Activated T-helper 1 cell treated with anti-CD3 and anti-CD28 coated beads, Interleukin-12 subunit alpha, Interleukin-12 subunit beta, Interleukin-2, Interleukin-4 antibody, amounts not matched to agents 30 ng/mL and 10 ng/mL and 1 ng/mL, durations not matched to agents 14 hours and 24 hours and 36 hours (primary cell): ENCODE measurements at regions of chr7 and their contacts with region 1.

Region 1: GRCh38 chr7:96321658-96322372 is at the start of gene SLC25A13:
- DNase-seq: peak; percentile 62
- H3K4me3 Mint-ChIP-seq: peak within 1 kb of the TSS; percentile 95
- H3K27ac Mint-ChIP-seq: peak within 1 kb of the TSS; percentile 98
- H3K4me1 Mint-ChIP-seq: peaks cover 41% of the 10 kb centered on the region
- H3K27me3 Mint-ChIP-seq: no peaks in the 10 kb centered on the region
- total RNA-seq, gene SLC25A13: 18.5 and 21.0 TPM in 2 replicates

Region 2: GRCh38 chr7:96285579-96285978 is 36.2 kb before region 1 on chr7:
- intact Hi-C with region 1: loop called (anchors 1 kb)
- DNase-seq: peak; percentile 50
- H3K4me3 Mint-ChIP-seq: peak overlapping the region; percentile 66
- H3K27ac Mint-ChIP-seq: peak overlapping the region; percentile 93
- H3K4me1 Mint-ChIP-seq: peaks cover 51% of the 10 kb centered on the region
- H3K27me3 Mint-ChIP-seq: no peaks in the 10 kb centered on the region

Region 3: GRCh38 chr7:96709381-96710228 is 387.8 kb after region 1 on chr7 and contains the start of gene SEM1:
- intact Hi-C with region 1: loop called (anchors 5 kb)
- DNase-seq: peak; percentile 53
- H3K4me3 Mint-ChIP-seq: peak within 1 kb of the TSS; percentile 99
- H3K27ac Mint-ChIP-seq: peak within 1 kb of the TSS; percentile 98
- H3K4me1 Mint-ChIP-seq: peaks cover 14% of the 10 kb centered on the region
- H3K27me3 Mint-ChIP-seq: no peaks in the 10 kb centered on the region
- total RNA-seq, gene SEM1: 41.2 and 42.8 TPM in 2 replicates

Region 4: DNA sequence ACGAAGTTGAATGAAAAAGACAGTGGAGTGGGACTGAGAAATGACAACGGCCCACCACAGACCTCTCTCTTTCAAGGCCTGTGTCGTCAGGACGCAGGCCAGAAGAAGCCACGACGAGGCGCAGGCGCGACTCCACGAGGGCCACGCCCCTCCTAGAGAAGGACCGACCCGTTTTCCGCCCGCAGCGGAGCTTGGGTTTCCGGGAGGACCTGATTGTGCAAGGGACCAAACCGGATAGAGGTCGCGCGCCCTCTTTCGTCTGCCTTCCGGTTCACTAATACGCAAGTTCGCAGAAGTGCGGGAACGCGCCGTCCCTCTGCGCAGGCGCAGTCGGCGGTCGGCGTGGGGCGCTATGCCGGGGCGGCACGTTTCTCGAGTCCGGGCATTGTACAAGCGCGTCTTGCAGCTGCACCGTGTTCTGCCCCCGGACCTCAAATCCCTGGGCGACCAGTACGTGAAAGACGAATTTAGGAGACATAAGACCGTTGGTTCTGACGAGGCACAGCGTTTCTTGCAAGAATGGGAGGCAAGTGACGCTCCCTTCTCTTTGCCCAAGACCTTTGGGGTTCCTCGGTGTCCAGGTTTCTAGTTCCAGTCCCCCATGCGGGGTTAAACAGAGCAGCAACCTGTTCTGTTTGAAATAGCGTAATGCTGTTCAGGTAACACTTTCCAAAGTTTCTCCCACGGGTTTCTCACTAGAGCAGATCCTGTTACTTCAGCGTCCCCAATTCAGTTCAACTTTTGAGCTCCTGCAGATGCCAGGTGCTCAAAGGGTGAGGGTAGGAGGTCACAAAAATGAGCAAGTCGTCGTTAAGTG is 795.8 kb after region 1 on chr7 and contains the start of gene SDHAF3:
- intact Hi-C with region 1: loop called (anchors 1 kb)
- DNase-seq: peak; percentile 97
- H3K4me3 Mint-ChIP-seq: peak within 1 kb of the TSS; percentile 94
- H3K27ac Mint-ChIP-seq: peak within 1 kb of the TSS; percentile 91
- H3K4me1 Mint-ChIP-seq: peaks cover 37% of the 10 kb centered on the region
- H3K27me3 Mint-ChIP-seq: no peaks in the 10 kb centered on the region
- total RNA-seq, gene SDHAF3: 24.1 and 25.4 TPM in 2 replicates

Region 5: GRCh38 chr7:97971990-97972943 is 1650.5 kb after region 1 on chr7:
- intact Hi-C with region 1: loop called (anchors 5 kb)
- DNase-seq: peak; percentile 80
- H3K4me3 Mint-ChIP-seq: peak overlapping the region; percentile 99
- H3K27ac Mint-ChIP-seq: peak overlapping the region; percentile 94
- H3K4me1 Mint-ChIP-seq: peaks cover 13% of the 10 kb centered on the region
- H3K27me3 Mint-ChIP-seq: peaks cover 4% of the 10 kb centered on the region